GM10248 (cell line): ENCODE measurements at regions of chr1 and their contacts with region 1.

Region 1: DNA sequence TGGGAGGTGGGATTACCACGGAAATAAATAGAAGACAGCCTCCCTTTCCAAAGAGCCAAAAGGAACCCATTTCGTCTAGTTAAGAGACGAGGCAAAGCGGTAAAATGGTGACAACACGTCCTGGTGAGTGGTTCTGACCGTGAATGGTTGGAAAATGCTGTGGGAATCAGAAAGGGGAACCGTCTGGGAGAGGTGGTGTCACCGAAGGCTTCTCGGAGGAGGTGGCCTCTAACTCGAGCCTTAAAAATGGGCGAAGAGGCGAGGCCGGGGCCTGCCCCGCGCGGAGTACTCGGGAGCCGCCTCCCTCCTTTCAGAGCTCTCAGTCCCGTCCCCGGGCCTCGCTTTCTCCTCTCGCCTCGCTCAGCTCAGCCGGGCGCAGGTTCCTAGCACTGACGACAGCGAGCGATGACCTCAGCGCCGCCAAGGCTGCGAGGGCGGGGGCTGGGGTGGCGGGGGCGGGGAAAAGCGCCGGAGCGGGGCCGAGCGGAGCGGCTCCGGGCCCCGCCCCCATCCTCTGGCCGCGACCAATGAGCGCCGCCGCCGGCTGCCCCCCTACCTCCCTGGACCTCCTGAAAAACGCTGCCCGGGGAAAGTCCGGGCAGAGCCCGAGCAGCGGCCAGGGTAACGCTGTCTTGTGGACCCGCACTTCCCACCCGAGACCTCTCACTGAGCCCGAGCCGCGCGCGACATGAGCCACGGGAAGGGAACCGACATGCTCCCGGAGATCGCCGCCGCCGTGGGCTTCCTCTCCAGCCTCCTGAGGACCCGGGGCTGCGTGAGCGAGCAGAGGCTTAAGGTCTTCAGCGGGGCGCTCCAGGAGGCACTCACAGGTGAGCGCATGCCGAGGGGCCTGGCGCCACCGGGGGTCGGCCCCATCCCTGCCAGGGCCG is at the start of gene BTG2:
- DNase-seq: peak; percentile 96
- CTCF ChIP-seq: no peak

Region 2: GRCh38 chr1:203280996-203281395 is 24.2 kb before region 1 on chr1:
- CTCF ChIA-PET with region 1: interaction called, 228 read pairs
- POLR2A ChIA-PET with region 1: interaction called, 215 read pairs
- DNase-seq: no peak
- CTCF ChIP-seq: no peak

Region 3: DNA sequence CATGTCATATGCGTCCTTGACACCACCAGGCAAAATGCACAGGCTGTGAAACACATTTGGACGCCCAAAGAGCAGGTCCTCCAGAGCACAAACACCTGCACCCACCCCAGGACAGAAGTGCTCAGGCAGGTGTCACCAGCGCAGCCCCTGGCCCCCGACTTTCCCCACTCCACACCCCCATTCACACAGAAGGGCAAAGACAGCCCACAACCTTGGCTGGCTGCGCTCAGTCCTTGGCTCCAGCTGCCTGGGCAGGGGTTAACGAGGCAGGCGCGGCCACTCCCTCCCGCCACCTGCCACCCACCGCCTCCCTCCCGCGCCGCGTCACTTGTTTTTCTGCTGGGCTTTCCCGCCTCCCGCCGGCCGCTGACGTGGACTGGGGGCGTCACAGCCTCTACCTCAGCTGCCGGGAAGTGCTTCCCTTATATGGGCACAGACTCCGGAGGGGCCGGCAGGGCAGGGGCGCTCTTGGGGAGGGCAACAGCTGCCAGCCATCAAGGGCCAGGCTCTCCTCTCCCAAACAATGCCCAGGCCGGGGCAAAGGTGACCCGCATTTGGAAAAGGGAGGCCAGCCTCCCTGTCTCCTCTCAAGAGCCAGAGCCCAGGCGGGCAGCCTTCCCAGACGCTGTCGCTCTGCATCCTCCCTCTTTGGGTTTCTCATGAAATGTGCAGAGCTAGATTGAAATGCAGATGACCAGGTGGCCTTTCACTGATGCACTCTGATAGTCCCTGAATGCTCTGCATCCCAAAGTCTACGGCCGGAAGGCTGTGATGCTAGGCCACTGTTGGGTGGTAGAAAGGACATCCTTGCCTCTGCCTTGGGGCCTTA is 14.7 kb before region 1 on chr1:
- CTCF ChIA-PET with region 1: interaction called, 27 read pairs
- POLR2A ChIA-PET with region 1: interaction called, 215 read pairs
- DNase-seq: peak; percentile 91
- CTCF ChIP-seq: no peak

Region 4: GRCh38 chr1:203320591-203321272 is 15.6 kb after region 1 on chr1:
- CTCF ChIA-PET with region 1: interaction called, 161 read pairs
- POLR2A ChIA-PET with region 1: interaction called, 225 read pairs
- DNase-seq: peak; percentile 67
- CTCF ChIP-seq: no peak

Region 5: GRCh38 chr1:203326830-203327683 is 21.9 kb after region 1 on chr1:
- CTCF ChIA-PET with region 1: interaction called, 161 read pairs
- POLR2A ChIA-PET with region 1: interaction called, 225 read pairs
- DNase-seq: peak; percentile 95
- CTCF ChIP-seq: peak; percentile 1

Region 6: GRCh38 chr1:203368624-203369451 is 63.7 kb after region 1 on chr1:
- CTCF ChIA-PET with region 1: no interaction called
- POLR2A ChIA-PET with region 1: no interaction called
- DNase-seq: no peak
- CTCF ChIP-seq: peak; percentile 11

Region 7: DNA sequence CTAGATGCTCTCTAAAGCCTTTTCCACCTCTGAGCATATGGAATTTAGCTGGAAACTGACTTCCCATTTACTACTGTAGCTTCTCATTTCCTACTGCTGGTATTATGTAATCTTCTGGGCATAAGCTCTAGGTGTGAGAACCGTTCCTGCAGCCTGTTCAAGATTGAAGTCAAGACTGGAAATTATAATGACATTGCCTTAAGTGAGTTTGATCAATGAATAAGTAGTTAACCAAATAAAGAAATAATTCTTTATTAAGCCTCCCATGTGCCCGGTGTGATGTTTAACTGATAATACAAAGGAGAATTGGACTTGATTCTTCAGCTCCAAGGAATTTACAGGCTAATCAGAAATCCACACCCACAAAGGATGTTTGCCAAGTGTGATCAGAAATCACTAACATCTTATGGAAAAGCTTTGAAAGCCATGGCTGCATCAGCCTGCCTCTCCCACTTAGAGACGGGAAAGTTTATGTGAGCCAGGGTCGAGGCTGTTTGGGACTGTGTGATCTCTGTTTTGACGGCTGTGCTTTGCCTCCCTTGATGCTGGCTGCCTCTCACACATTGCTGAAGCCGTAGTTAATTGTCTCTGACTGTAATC is 134.1 kb after region 1 on chr1:
- CTCF ChIA-PET with region 1: no interaction called
- POLR2A ChIA-PET with region 1: no interaction called
- DNase-seq: no peak
- CTCF ChIP-seq: no peak